Stomach (tissue), 19 donors: ENCODE measurements at regions of chr20 and their contacts with region 1.

Region 1: DNA sequence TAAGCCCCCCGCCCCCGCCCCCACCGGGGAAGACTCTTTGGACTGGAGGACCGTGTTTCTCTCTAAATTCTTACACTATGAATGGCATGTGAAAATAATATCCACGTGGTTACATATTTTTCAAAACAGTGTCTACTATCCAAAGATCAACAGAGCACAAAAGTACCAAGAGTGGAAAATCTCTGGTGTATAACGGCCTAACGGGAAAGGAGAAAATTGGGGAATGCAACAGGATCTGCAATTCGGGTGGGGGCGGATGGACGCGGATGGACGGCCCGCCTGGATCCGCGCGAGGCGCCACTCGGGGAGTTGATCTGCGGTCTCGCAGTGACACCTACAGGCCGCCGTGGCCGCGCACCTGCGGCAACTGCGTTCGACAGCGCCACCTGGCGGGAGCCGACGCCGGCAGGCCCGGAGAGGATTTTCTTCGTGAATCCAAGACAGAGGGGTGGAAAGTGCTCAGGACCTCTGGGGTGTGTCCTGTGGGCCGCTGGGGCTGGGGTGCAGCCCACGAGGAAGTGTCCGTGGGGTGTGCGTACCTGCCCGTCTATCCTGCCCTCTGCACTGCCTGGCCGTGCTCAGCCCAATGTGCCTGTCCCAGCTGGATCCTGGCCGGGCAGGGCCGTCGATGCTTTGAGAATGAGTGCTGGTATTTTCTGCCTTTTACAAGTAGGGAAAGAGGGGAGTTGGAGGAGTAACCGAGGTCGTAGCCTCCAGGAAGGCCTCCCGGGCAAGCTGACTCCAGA is 18.6 kb downstream of the ANKRD60 start:
- DNase-seq: peak; percentile 88 to 92
- H3K4me3 ChIP-seq: no peak overlapping the region
- H3K27ac ChIP-seq: no peak overlapping the region
- H3K4me1 ChIP-seq: peaks cover 0 to 7% (median 3%) of the 10 kb centered on the region in 4 donors
- H3K27me3 ChIP-seq: peaks cover 0 to 53% (median 13%) of the 10 kb centered on the region in 3 donors
- CTCF ChIP-seq: peak in 6 of 7 experiments; percentile 79 to 100 (median 100)
- EP300 ChIP-seq: no peak
- POLR2A ChIP-seq: no peak

Region 2: DNA sequence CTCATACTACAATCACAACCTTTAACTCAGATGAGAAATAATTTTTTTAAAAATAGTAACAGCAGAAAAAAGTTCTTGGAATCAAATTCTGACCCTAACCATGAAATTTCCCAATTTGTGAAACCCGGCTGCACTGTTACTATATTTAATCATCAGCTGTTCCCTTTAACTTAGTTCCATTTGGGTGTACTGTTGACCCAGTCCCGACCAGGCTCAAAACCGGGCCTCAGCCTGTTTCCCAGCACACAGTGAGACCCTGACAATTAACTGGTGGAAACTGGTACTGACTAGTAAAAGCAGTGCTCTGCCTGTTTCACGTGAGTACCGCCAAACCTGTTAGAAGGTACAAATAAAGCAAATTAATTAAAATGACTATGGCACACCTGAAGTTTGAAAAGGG is 691.9 kb before region 1 on chr20:
- intact Hi-C with region 1: loop called (anchors 5 kb)
- DNase-seq: no peak
- H3K4me3 ChIP-seq: no peak overlapping the region
- H3K27ac ChIP-seq: no peak overlapping the region
- H3K4me1 ChIP-seq: peaks cover 0 to 3% (median 0%) of the 10 kb centered on the region in 4 donors
- H3K27me3 ChIP-seq: no peaks in the 10 kb centered on the region
- CTCF ChIP-seq: no peak
- EP300 ChIP-seq: no peak
- POLR2A ChIP-seq: no peak

Region 3: GRCh38 chr20:58150772-58151171 is 59.1 kb before region 1 on chr20:
- intact Hi-C with region 1: no loop called
- DNase-seq: peak in 1 of 2 donors; percentile 68
- H3K4me3 ChIP-seq: no peak overlapping the region
- H3K27ac ChIP-seq: no peak overlapping the region
- H3K4me1 ChIP-seq: no peaks in the 10 kb centered on the region
- H3K27me3 ChIP-seq: peaks cover 0 to 76% (median 18%) of the 10 kb centered on the region in 3 donors
- CTCF ChIP-seq: no peak
- EP300 ChIP-seq: no peak
- POLR2A ChIP-seq: no peak